Activated B cell treated with CpG ODN at 0.5 μM for 24 hours (primary cell): ENCODE measurements at regions of chr11 and their contacts with region 1.

Region 1: GRCh38 chr11:114348200-114349191 is 51.8 kb downstream of the C11orf71 start:
- DNase-seq: no peak
- ATAC-seq: no peak
- H3K4me3 Mint-ChIP-seq: no peak overlapping the region
- H3K27ac Mint-ChIP-seq: no peak overlapping the region
- H3K4me1 Mint-ChIP-seq: no peaks in the 10 kb centered on the region
- H3K27me3 Mint-ChIP-seq: peaks cover 7% of the 10 kb centered on the region
- CTCF ChIP-seq: peak; percentile 45

Region 2: DNA sequence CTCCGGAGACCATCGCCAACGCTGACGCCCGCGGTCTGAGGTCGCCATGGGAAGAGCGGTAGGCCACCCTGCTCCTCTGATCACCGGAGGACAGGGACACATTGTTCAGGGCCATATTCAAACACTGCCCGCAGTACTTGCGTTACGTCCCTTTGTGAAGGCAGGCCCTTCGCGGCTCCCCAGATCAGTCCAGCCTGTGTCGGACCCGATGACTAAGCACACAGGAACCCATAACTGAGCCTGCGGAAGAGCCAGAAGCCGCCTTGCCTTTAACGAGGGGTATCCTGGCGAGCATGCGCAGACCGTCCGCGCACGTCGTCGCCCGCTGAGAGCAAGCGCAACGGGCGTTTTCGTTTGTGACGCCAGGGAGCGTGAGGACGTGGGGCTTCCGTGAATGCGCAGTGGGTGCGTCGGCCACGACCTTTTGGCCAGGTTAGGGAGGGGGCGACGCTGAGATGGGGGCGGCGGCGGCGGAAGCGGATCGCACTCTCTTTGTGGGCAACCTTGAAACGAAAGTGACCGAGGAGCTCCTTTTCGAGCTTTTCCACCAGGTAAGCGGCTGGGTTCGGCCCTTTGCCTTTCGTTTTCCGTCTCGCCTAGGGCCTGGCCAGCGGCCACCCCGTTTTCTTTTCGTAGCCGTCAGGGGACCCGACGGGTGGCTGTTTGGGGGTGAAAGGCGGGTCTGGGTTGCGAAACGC is 51.9 kb after region 1 on chr11 and contains the starts of genes C11orf71 and RBM7:
- CTCF ChIA-PET with region 1: no interaction called
- POLR2A ChIA-PET with region 1: no interaction called
- intact Hi-C with region 1: loop called (anchors 1 kb)
- DNase-seq: peak; percentile 93
- ATAC-seq: peak; percentile 93
- H3K4me3 Mint-ChIP-seq: peak within 1 kb of the TSS; percentile 96
- H3K27ac Mint-ChIP-seq: peak within 1 kb of the TSS; percentile 98
- H3K4me1 Mint-ChIP-seq: peaks cover 50% of the 10 kb centered on the region
- H3K27me3 Mint-ChIP-seq: no peaks in the 10 kb centered on the region
- CTCF ChIP-seq: no peak
- total RNA-seq, gene C11orf71: 9.5 and 11.1 TPM in 2 replicates
- total RNA-seq, gene RBM7: 33.6 and 34.1 TPM in 2 replicates

Region 3: DNA sequence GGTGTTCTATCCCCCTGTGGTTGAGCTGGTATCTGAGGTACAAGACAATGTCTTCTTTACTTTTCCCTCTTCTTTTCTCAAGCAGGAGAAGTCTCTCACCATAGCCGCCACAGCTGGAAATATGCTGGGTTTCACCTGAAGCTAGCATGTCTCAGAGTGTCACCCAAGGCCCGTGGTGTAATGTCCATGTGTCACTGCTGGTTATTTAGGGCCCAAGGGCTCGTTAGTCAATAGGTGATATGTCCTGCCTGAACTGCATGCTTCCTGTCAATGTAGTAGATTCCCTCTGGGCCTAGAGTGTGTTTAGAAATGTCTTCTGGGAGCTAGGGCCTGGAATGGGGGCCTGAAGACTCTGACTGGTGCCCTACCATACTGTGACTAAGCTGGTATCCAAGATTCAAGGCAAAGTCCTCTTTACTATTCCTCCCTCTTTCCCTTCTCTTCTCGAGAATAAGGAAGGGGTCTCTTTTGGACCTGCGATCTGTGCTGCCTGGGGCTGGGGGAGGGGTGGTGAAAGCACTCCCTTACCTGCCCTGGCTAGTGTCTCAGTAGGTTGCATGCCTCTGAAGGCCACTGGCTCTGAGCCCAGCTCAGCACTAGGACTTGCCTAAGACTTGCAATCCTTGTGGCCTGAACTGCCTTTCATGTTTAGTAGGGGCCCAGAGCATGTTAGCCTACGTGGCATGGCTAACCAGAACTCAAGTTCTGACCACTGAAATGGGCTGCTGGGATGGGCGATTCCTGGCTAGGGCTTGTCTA is 77.6 kb after region 1 on chr11:
- CTCF ChIA-PET with region 1: no interaction called
- POLR2A ChIA-PET with region 1: no interaction called
- intact Hi-C with region 1: no loop called
- DNase-seq: no peak
- ATAC-seq: no peak
- H3K4me3 Mint-ChIP-seq: no peak overlapping the region
- H3K27ac Mint-ChIP-seq: no peak overlapping the region
- H3K4me1 Mint-ChIP-seq: no peaks in the 10 kb centered on the region
- H3K27me3 Mint-ChIP-seq: no peaks in the 10 kb centered on the region
- CTCF ChIP-seq: no peak